ENCODE measurements at regions of chr11 and their contacts with region 1.

Region 1: DNA sequence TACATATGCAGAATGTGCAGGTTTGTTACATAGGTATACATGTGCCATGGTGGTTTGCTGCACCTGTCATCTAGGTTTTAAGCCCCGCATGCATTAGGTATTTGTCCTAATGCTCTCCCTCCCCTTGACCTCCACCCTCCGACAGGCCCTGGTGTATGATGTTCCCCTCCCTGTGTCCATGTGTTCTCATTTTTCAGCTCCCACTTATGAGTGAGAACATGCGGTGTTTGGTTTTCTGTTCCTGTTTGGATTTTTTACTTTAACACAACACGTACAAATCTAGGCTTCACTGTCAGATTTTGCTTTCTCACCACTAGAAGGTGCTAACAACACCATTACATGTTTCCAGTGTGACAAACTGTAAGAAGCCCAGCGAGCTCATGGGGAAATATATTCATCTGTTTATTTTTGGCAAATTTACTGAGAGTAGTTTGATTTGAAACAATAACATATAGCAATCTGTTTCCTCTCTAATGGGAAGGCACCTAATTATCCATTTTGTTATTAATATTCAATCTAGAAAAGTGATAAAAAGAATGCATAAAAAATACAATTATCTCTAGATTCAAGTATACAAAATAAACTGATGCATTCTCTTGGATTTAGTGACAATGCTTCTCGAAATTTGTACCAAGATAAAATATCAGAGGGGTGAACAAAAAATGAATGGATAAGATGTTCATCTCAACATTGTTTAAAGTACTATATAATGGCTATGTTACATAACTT is 23.2 kb upstream of the BIRC3 start:
- DNase-seq: peak; percentile 79
- H3K4me3 Mint-ChIP-seq: peak overlapping the region; percentile 86
- H3K27ac Mint-ChIP-seq: peak overlapping the region; percentile 90
- H3K4me1 Mint-ChIP-seq: peaks cover 31% of the 10 kb centered on the region
- H3K27me3 Mint-ChIP-seq: no peaks in the 10 kb centered on the region

Region 2: GRCh38 chr11:101612481-101612880 is 681.6 kb before region 1 on chr11:
- intact Hi-C with region 1: no loop called
- DNase-seq: no peak
- H3K4me3 Mint-ChIP-seq: no peak overlapping the region
- H3K27ac Mint-ChIP-seq: no peak overlapping the region
- H3K4me1 Mint-ChIP-seq: no peaks in the 10 kb centered on the region
- H3K27me3 Mint-ChIP-seq: no peaks in the 10 kb centered on the region

Region 3: DNA sequence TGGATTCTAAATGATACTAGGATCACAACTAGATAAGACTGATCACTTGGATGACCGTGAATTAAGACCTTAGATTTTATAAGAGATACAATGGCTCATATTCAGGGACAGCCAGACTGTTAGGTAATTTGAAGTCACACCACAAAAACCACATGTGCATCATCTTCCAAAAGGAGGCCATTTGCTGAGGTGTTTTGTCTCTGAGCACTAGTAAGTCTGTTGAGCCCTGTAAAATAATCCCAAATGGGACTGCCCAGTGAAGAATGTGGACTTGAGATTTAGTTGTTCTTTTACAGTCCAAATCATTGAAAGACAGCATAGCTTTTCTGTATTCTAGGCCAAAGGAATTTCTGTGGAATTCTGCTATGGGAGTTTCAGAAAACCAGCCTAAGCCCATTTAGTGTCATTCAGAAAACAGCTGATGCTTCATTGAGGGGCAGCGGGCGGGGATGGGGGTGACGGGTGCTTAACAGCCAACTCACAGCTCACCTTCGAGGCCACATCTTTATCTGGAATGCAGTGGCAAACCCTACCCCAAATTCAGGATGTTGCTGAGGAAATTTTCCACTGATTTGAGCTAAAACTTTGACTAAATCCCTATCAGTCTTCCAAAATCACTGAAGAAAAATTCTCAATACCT is 56.8 kb before region 1 on chr11:
- intact Hi-C with region 1: no loop called
- DNase-seq: no peak
- H3K4me3 Mint-ChIP-seq: no peak overlapping the region
- H3K27ac Mint-ChIP-seq: no peak overlapping the region
- H3K4me1 Mint-ChIP-seq: no peaks in the 10 kb centered on the region
- H3K27me3 Mint-ChIP-seq: peaks cover 16% of the 10 kb centered on the region

Region 4: GRCh38 chr11:102306048-102306585 is 12.1 kb after region 1 on chr11:
- intact Hi-C with region 1: loop called (anchors 1 kb)
- DNase-seq: no peak
- H3K4me3 Mint-ChIP-seq: peak overlapping the region; percentile 58
- H3K27ac Mint-ChIP-seq: peak overlapping the region; percentile 81
- H3K4me1 Mint-ChIP-seq: peaks cover 47% of the 10 kb centered on the region
- H3K27me3 Mint-ChIP-seq: no peaks in the 10 kb centered on the region

Region 5: GRCh38 chr11:102384419-102385079 is 90.5 kb after region 1 on chr11:
- intact Hi-C with region 1: no loop called
- DNase-seq: no peak
- H3K4me3 Mint-ChIP-seq: no peak overlapping the region
- H3K27ac Mint-ChIP-seq: no peak overlapping the region
- H3K4me1 Mint-ChIP-seq: peaks cover 14% of the 10 kb centered on the region
- H3K27me3 Mint-ChIP-seq: no peaks in the 10 kb centered on the region

Measured in activated CD4-positive, alpha-beta T cell treated with anti-CD3 and anti-CD28 coated beads, Interleukin-2, amount 10 ng/mL, durations not matched to agents 24 days and 14 days (primary cell).